Activated CD4-positive, alpha-beta memory T cell treated with anti-CD3 and anti-CD28 coated beads, Interleukin-2, amount 10 ng/mL, durations not matched to agents 7 days and 5 days (primary cell): ENCODE measurements at regions of chr16 and their contacts with region 1.

Region 1: DNA sequence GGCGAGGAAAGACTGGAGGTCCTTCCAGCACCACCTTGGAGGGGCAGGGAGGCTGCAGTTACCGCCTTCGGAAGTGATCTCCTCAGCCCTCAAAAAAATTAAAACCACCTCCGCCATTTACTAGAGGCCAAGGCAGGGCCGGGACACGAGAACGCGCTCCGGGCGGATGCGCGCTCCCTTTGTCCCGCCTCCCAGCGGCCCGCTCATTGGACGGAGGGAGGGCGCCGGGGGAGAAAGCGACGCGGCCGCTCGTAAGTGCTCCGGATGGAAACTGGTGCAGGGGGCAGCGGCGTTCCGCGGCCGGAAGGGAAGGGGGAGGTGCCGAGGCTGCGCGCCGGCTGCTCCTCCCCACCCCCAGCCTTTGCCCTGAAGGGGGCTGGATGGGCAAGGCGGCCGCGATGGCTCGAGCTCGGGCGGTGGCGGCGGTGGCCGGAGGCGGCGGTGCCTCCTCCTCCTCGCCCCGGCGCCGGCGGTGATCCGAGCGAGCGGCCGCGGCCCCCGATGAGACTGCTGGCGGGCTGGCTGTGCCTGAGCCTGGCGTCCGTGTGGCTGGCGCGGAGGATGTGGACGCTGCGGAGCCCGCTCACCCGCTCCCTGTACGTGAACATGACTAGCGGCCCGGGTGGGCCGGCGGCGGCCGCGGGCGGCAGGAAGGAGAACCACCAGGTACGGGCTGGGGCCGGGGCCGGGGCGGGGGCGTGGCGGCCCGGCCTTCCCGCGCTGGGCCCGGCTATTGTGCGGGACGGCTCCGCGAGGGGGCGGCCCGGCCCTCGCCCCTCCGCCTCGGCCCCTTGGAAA is at the start of gene METTL9:
- DNase-seq: peak; percentile 96
- H3K4me3 Mint-ChIP-seq: peak within 1 kb of the TSS; percentile 88
- H3K27ac Mint-ChIP-seq: peak within 1 kb of the TSS; percentile 85
- H3K4me1 Mint-ChIP-seq: peaks cover 53% of the 10 kb centered on the region
- H3K27me3 Mint-ChIP-seq: no peaks in the 10 kb centered on the region
- total RNA-seq, gene METTL9: 84.2 to 86.1 TPM

Region 2: GRCh38 chr16:21611546-21612384 is 12.3 kb after region 1 on chr16:
- CTCF ChIA-PET with region 1: interaction called, 8 read pairs
- POLR2A ChIA-PET with region 1: interaction called, 33 read pairs
- DNase-seq: peak; percentile 20
- H3K4me3 Mint-ChIP-seq: no peak overlapping the region
- H3K27ac Mint-ChIP-seq: peak overlapping the region; percentile 73
- H3K4me1 Mint-ChIP-seq: peaks cover 83% of the 10 kb centered on the region
- H3K27me3 Mint-ChIP-seq: no peaks in the 10 kb centered on the region

Region 3: DNA sequence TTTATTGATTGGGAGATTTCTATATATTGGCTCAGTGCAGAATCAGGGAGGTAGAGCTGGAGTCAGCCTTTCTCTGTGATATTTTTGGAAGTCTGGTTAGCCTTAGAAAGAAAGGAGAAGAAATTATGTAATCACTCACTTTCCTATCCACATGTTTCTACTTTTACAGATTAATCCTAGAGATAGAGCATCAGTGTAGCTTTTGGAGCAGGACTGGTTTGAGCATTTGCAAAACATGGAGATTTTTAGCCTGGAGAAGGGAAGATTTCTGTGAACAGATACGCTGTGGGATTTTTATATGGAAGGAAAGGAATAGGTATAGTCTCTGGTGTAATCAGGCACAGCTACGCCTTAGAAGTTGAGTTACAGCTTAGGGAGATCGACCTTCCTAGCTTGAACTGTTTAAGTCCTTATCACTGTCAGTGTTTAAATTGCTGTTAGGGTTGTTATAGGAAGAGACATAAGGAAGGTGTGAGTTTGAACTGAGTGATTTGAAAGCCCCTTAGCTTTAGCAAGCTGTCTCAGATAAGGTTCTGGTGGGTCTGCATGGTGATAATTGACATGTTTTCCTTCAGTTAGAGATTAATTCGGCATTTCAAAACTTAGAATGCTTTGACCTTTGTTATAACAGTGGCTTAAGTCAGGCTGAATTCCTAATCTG is 20.5 kb after region 1 on chr16:
- CTCF ChIA-PET with region 1: interaction called, 5 read pairs
- POLR2A ChIA-PET with region 1: interaction called, 10 read pairs
- DNase-seq: no peak
- H3K4me3 Mint-ChIP-seq: no peak overlapping the region
- H3K27ac Mint-ChIP-seq: no peak overlapping the region
- H3K4me1 Mint-ChIP-seq: peaks cover 73% of the 10 kb centered on the region
- H3K27me3 Mint-ChIP-seq: no peaks in the 10 kb centered on the region

Region 4: DNA sequence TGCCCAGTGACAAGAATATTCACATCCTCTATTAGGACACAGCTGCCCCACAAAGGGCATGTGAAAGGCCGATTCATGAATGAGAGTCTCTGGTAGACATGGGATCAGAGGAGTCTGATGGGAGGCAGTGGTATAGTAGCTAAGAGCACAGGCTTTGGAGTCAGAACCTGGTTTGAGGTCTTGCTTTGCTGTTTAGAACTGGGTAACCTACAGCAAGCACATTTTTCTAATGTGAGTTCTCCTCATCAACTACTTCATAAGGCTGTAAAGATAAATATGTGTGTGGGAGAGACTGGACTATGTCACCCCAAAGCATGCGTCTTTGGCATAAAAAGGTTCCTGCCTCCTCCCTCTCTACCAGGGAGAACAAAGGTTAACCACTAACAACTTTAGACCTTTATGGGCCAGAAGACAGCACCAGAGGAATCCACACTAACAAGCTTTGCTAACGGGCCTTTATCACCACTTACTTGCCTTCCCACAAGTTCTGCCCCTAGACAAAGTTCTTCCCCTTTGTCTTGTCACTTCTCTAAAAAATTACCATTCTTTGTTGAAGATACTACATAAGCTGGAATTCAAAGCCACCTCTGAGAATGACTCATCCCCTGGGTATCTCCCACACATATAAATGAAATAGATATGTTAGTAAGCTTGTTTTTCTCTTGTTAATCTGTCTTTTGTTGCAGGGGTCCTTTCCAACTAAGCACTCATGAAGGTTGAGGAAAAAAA is 753.9 kb after region 1 on chr16:
- CTCF ChIA-PET with region 1: no interaction called
- POLR2A ChIA-PET with region 1: no interaction called
- DNase-seq: no peak
- H3K4me3 Mint-ChIP-seq: no peak overlapping the region
- H3K27ac Mint-ChIP-seq: peak overlapping the region; percentile 77
- H3K4me1 Mint-ChIP-seq: peaks cover 49% of the 10 kb centered on the region
- H3K27me3 Mint-ChIP-seq: no peaks in the 10 kb centered on the region